ENCODE measurements at regions of chr6 and their contacts with region 1.

Region 1: DNA sequence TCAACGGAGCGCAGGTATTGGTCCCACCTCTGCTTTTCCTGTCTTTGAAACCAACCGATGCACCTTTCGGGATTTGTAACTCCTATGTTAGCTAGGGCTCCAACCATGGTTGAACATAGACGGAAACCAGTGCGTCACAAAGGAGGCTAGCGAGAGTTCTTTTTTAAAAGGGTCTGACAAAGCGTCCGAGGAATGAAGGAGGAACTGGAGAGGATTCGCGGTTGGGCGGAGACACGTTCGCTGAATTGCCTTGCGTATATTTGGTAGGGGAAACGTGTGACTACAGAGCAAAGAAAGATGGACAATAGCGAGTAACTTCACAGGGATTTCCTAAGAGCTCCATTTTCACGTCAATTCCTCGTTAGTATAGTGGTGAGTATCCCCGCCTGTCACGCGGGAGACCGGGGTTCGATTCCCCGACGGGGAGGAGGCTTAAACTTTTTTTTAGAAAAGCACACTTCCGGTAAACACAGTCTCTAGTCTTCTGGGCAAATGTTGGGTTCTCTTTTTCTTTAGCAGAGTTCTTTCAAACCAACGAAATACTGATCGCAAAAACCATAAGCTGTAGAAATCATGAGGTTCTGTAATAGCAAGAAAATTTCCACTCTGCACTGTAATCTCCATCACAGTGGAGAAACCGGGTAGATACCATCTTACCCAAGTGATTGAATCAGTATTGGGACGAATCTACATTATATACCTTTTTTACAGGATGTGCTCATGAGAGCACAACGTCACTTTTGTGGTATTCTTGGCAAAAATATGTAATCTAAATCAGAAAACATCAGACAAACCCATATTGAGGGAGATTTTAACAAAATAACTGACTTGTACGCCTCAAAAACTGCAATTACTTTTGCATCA is 6.6 kb upstream of the ZNF184 start:
- DNase-seq: peak; percentile 84
- H3K4me3 ChIP-seq: peak overlapping the region; percentile 66
- H3K27ac ChIP-seq: peak overlapping the region; percentile 82
- H3K4me1 ChIP-seq: peaks cover 9% of the 10 kb centered on the region; the same call in 1 of the 2 replicates
- H3K27me3 ChIP-seq: no peaks in the 10 kb centered on the region
- CTCF ChIP-seq: no peak

Region 2: DNA sequence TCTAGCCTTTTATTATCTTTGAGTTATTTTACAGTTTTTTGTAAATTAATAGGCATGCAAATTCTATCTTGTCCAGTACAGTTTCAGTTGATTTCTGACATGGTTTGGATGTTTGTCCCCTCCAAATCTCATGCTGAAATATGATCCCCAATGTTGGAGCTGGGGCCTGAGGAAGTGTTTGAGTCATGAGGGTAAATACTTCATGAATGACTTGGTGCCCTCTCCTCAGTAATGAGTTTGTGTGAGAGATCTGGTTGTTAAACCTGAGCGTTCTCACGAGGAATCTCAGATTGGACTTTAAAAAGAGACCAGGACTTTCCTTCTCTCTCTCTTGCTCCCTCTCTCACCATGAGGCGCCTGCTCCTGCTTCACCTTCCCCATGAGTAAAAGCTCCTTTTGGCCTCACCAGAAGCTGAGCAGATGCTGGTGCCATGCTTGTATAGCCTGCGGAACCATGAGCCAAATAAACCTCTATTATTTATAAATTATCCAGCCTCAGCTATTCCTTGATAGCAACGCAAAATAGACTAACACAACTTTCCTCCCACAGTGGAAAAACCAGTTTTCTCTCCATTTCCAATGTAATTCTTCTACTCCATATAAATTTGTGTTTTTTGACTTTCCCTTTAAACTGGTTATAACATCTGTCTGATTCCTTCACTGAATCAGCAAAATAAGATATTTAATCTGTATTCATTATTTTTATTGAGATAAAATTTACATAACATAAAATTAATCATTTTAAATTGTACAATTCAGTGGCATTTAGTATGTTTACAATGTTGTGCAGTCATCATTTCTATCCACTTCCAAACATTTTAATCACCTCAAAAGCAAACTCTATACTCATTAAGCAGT is 310.7 kb before region 1 on chr6:
- CTCF ChIA-PET with region 1: no interaction called
- POLR2A ChIA-PET with region 1: no interaction called
- intact Hi-C with region 1: loop called (anchors 5 kb)
- DNase-seq: peak; percentile 42 to 79
- H3K4me3 ChIP-seq: peak overlapping the region; percentile 42; the same call in 1 of the 2 replicates
- H3K27ac ChIP-seq: peak overlapping the region; percentile 79
- H3K4me1 ChIP-seq: peaks cover 29% of the 10 kb centered on the region
- H3K27me3 ChIP-seq: no peaks in the 10 kb centered on the region
- CTCF ChIP-seq: no peak

Region 3: DNA sequence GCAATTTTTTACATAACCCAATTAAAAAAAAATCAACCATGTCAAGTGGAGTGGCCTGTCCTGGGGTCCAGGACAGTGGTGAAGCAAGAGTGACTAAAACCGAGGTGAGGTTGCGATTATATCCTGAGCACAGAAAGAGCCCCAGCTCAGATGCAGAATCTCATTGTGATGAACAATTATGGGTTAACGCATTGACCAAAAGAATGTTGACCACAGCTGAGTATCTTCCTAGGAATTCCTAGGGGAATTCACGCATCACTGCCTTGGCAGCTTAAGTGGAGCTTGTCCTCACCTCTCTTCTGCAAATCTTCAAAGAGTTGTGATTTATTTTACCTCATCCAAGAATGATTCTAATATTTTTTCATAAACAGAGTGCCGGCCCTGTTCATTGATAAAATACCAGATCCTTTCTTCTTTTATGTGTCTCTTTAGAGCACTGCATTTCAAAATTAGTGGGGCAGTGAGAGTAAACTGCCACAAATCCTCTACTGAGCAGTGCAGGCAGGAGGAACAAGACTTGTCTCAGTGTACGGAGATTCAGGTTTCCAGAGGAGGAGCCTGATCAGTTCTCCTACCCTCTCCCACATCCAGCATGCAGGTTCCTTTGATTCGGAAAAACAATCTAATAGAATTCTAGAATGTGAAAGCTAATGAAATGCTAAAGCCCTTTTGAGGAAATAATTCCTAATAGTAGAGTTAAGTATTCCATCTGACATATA is 53.4 kb after region 1 on chr6:
- CTCF ChIA-PET with region 1: no interaction called
- POLR2A ChIA-PET with region 1: no interaction called
- intact Hi-C with region 1: no loop called
- DNase-seq: peak; percentile 51 to 76
- H3K4me3 ChIP-seq: peak overlapping the region; percentile 13; the same call in 1 of the 2 replicates
- H3K27ac ChIP-seq: no peak overlapping the region
- H3K4me1 ChIP-seq: peaks cover 18% of the 10 kb centered on the region
- H3K27me3 ChIP-seq: no peaks in the 10 kb centered on the region
- CTCF ChIP-seq: no peak

Region 4: GRCh38 chr6:28053584-28053983 is 574.0 kb after region 1 on chr6:
- CTCF ChIA-PET with region 1: no interaction called
- POLR2A ChIA-PET with region 1: no interaction called
- intact Hi-C with region 1: no loop called
- DNase-seq: no peak
- H3K4me3 ChIP-seq: no peak overlapping the region
- H3K27ac ChIP-seq: no peak overlapping the region
- H3K4me1 ChIP-seq: no peaks in the 10 kb centered on the region
- H3K27me3 ChIP-seq: no peaks in the 10 kb centered on the region; the same call in 1 of the 2 replicates
- CTCF ChIP-seq: no peak